Left colon (tissue), 2 donors: ENCODE measurements at regions of chr21 and their contacts with region 1.

Region 1: DNA sequence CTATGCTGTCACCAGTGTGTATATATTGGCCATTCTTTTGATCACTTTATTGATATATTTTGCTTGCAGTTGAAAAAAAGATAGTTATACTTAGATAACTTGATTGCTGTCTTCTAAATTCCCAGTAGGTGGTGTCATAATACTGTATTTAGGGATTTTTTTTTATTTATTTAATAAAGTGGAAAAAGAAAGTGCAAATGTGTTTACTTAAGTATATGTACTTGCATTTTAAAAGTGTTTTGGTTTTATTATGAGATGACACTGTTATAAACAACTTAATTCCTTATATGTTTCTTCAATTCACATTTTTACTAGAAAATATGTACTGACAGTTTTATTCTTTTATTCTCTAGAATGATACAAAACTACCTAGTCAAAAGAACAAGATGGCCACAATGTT is 164.8 kb downstream of the USP25 start:
- DNase-seq: no peak
- ATAC-seq: no peak

Region 2: GRCh38 chr21:15820852-15821379 is 73.7 kb before region 1 on chr21:
- intact Hi-C with region 1: no loop called
- DNase-seq: no peak
- ATAC-seq: no peak

Region 3: GRCh38 chr21:16323596-16323995 is 429.0 kb after region 1 on chr21:
- intact Hi-C with region 1: loop called in 1 of 2 experiments (anchors 10 kb)
- DNase-seq: no peak
- ATAC-seq: no peak